Breast epithelium (tissue), 4 donors: ENCODE measurements at regions of chr9 and their contacts with region 1.

Region 1: DNA sequence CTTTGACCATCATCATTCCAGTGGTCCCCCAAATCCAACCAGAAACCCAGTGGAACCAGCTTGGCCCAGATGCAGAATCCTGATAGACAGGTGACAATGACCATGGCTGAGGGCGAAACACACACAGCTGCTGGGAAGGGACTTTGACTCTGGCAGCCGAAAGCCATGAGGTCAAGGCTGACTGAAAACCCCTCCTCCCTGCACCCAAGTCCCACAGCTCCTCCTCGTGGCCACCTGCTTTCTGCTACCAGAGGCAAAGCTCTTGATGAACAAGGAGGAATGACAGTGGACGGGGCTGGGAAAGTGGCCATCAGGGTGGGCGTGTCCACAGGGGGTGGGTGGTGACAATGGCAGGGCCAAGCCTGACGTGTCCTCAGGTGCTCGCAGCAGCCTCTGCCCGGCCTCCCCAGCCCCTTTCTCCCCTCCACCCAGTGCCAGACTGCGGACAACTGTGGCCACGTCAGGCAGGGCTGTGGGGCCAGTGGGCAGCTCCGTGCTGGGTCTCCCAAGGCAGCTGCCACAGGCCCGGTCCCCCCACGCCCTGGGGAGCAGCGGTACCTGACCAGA is 30.8 kb upstream of the SARDH start:
- DNase-seq: peak; percentile 14 to 41
- H3K4me3 ChIP-seq: no peak overlapping the region
- H3K27ac ChIP-seq: no peak overlapping the region
- H3K4me1 ChIP-seq: no peaks in the 10 kb centered on the region
- H3K27me3 ChIP-seq: no peaks in the 10 kb centered on the region
- CTCF ChIP-seq: no peak
- POLR2A ChIP-seq: no peak

Region 2: DNA sequence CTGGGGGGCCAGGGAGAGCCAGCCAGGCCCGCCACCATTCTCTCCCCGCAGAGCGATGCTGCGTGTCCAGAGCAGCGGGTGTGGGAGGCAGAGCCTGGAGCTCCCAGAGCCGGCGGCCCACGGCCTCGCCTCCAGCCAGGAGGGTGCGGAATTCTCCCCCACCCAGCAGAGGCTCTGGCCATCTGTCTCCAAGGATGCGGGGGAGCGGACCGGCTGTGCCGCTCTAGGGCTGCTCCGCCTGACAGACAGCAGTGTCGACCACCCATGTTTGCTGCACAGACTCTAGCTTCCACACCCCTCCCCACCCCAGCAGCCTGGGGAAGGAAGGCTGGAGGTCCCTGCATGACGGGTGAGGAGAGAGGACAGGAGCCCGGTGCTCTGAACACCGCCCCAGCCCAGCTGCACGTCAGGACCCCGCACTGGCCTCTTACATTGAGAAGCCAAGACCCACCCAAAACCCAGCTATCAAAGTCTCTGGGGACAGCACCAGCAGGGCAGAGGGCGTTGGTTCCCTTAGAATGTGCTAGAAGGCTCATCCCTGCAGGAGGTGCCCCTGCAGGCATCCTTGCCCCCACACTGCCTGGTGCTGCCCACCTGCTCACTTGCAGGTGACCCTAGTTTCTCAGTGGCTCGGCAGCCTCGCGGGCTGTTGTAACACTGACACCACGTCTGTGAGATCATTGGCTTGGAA is 1178.5 kb after region 1 on chr9:
- intact Hi-C with region 1: loop called (anchors 5 kb)
- DNase-seq: no peak
- H3K4me3 ChIP-seq: no peak overlapping the region
- H3K27ac ChIP-seq: no peak overlapping the region
- H3K4me1 ChIP-seq: peaks cover 0 to 7% of the 10 kb centered on the region in 2 donors
- H3K27me3 ChIP-seq: peaks cover 0 to 49% of the 10 kb centered on the region in 2 donors
- CTCF ChIP-seq: no peak
- POLR2A ChIP-seq: no peak